GM13977 (cell line): ENCODE measurements at regions of chr1 and their contacts with region 1.

Region 1: DNA sequence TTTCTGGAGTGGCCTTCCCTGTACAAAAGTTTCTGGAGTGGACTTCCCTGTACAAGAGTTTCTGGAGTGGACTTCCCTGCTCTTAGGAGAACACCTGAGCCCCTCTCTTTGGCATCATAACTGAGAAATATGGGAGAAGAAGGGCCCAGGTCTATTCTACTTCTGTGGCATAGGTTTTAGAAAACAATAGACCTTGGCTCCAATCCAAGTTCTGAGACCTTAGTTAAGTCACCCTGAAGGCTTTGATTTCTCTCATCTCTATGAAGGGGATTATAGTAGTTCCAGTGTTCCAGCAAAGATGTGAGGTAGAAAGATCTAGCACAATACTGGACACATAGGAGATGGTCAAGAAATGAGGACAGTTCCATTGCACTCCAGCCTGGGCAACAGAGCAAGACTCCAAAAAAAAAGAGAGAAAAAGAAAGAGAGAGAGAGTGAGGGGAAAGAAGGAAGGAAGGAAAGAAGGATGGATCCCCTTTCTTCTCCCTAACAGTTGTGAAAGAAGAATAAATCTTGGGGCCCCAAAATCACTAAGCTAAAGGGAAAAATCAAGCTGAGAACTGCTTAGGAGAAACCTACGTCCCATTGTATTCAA is 13.3 kb upstream of the EIF4G3 start:
- DNase-seq: no peak
- CTCF ChIP-seq: no peak

Region 2: DNA sequence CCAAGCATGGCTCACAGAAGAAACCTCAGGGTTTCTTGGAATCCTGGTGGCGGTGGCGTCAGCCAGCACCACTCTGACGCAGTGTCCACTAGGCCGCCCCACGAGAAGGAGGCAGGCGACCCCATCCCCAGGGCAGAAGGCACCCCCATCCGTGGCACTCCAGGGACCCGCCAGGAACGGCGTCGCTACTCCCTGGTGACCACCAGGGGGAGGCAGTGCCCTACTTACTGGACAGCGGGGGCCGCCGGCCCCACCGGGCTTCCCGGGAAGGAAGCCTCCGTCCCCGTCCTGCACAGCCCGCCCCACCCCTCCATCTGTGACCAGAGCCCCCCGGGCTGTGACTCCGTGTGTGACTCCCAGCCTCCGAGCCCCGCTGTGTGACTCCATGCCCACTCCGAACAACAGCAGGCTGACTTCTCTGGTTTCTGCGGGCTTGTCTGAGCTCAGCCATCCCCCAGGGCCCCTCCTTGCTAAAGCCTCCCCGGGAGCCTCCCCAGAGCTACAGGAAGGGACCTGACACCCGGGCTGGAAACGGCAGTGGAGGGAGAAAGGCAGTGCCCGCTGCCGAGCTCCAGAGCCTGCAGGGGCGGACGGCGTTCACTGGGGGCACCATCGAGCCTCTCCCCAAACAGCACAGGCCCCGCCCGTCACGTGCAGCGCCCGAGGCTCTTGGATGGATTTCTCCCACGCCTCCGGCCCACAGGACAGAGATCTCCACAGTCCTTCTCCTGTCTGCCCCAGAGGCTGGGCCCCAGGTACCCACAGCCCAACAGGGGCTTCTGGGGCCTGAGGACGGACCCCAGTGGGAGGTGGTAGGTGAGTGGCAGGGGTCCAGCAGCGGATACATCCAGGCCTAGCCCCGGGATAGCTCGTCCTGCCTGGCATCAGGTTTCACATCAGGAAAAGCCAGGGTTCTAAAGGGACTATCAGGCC is 493.3 kb before region 1 on chr1:
- in situ Hi-C with region 1: loop called (anchors 10 kb)
- DNase-seq: peak; percentile 92
- CTCF ChIP-seq: peak; percentile 92

Region 3: GRCh38 chr1:21100481-21100921 is 89.5 kb before region 1 on chr1:
- in situ Hi-C with region 1: no loop called
- DNase-seq: no peak
- CTCF ChIP-seq: no peak